Activated CD4-positive, alpha-beta T cell treated with anti-CD3 and anti-CD28 coated beads for 36 hours (primary cell): ENCODE measurements at regions of chr6 and their contacts with region 1.

Region 1: GRCh38 chr6:24991810-24992467 is 56.2 kb upstream of the RIPOR2 start:
- DNase-seq: peak; percentile 83
- ATAC-seq: peak; percentile 91
- H3K4me3 Mint-ChIP-seq: peak overlapping the region; percentile 49
- H3K27ac Mint-ChIP-seq: peak overlapping the region; percentile 82
- H3K4me1 Mint-ChIP-seq: peaks cover 63% of the 10 kb centered on the region
- H3K27me3 Mint-ChIP-seq: no peaks in the 10 kb centered on the region

Region 2: DNA sequence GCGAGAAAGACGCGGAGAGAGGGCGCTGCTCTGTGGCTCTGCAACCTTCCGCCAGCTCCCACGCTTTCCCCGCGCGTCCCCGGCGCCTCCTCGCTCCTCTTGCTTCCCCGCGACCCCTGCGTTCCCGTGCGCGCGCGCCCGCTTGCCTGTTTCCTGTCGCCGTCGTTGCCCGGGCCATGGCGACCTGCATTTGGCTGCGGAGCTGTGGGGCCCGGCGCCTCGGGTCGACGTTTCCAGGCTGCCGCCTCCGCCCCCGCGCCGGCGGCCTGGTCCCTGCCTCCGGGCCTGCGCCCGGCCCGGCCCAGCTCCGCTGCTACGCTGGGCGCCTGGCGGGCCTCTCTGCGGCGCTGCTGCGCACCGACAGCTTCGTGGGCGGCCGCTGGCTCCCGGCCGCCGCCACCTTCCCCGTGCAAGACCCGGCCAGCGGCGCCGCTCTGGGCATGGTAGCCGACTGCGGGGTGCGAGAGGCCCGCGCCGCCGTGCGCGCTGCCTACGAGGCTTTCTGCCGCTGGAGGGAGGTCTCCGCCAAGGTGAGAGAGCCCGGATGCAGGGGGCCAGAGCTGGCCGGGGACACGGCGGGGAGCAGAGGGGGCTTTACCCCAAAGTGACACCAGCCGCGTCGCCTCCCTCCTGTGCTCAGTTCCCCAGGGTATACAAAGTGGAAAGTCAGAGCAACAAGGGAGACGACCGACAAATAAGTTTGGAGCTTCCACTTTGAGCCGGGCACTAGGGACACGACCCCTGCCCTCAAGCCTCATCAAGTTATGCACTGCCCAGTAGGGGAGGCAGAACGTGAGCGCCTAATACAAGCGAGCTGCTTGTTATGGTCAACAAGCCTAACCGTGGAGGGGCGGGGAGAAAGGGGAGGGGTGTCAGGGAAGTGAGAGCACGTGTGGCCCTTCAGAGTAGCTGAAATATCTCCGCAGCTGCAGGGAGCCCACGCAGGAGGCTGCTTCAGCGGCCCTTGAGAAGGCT is 496.8 kb before region 1 on chr6 and contains the start of gene ALDH5A1:
- CTCF ChIA-PET with region 1: no interaction called
- POLR2A ChIA-PET with region 1: no interaction called
- intact Hi-C with region 1: no loop called
- DNase-seq: peak; percentile 92
- ATAC-seq: peak; percentile 84
- H3K4me3 Mint-ChIP-seq: peak within 1 kb of the TSS; percentile 77
- H3K27ac Mint-ChIP-seq: peak within 1 kb of the TSS; percentile 76
- H3K4me1 Mint-ChIP-seq: peaks cover 14% of the 10 kb centered on the region
- H3K27me3 Mint-ChIP-seq: no peaks in the 10 kb centered on the region
- total RNA-seq, gene ALDH5A1: 16.5 to 18.8 TPM

Region 3: DNA sequence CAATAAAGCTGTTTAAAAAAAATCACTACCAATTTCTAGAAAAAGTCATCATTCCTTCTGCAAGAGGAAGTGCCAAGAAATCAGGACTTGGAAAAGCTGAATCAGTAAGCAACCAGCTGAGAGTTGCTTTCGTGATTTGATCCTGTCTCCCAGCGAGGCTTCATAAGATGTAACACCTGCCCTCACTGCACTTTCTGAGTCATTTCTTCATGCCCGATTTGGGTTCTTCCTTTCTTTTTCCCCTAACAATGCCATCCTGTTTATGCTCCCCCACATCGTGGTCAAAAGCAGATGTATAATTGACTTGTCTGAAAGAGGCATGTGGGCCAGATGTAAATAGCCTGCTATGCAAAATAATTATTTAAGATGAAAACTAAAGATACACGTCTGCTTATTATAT is 108.3 kb before region 1 on chr6:
- CTCF ChIA-PET with region 1: interaction called, 30 read pairs
- POLR2A ChIA-PET with region 1: no interaction called
- intact Hi-C with region 1: no loop called
- DNase-seq: peak; percentile 69
- ATAC-seq: peak; percentile 85
- H3K4me3 Mint-ChIP-seq: peak overlapping the region; percentile 72
- H3K27ac Mint-ChIP-seq: peak overlapping the region; percentile 100
- H3K4me1 Mint-ChIP-seq: peaks cover 88% of the 10 kb centered on the region
- H3K27me3 Mint-ChIP-seq: no peaks in the 10 kb centered on the region

Region 4: DNA sequence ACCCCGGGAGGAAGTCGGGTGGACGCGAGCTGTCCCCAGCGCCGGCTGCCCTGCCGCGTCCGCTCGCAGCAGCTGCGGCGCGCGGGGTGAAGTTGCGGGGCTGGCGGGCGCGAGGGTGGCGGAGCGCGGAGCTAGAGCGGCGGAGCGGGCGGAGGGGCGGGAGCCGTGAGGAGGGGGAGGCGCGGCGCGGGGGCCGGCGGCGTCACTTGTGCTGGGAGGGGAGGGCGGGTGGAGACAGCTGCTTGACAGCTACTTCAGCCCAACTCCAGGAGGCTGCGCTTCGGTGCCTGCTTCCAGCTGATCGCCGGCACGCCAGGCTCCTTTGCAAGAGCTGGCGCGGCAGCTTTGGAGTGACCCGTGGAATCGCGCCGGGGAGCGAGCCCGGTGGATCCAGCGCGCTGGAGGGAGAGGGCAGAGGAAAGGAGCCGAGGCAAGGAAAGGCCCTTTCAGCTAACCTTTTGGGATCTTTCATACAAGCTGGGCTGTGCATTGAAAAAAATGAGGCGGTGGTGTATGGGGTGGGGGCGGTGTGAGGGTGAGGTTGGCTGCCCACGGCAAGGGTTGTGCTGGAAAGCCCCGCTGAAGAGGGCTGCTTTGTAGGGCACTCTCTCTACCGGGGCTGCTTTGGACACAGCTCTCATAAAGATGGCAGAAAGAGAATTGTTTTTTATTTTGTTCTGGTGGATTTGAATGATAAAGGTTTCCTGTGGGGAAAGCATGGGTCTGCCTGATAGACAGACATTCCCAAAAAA is 80.8 kb before region 1 on chr6:
- CTCF ChIA-PET with region 1: interaction called, 27 read pairs
- POLR2A ChIA-PET with region 1: interaction called, 3 read pairs
- intact Hi-C with region 1: loop called in 1 of 2 experiments (anchors 2 kb)
- DNase-seq: peak; percentile 80
- ATAC-seq: peak; percentile 8
- H3K4me3 Mint-ChIP-seq: peak overlapping the region; percentile 85
- H3K27ac Mint-ChIP-seq: peak overlapping the region; percentile 90
- H3K4me1 Mint-ChIP-seq: peaks cover 83% of the 10 kb centered on the region
- H3K27me3 Mint-ChIP-seq: no peaks in the 10 kb centered on the region

Region 5: DNA sequence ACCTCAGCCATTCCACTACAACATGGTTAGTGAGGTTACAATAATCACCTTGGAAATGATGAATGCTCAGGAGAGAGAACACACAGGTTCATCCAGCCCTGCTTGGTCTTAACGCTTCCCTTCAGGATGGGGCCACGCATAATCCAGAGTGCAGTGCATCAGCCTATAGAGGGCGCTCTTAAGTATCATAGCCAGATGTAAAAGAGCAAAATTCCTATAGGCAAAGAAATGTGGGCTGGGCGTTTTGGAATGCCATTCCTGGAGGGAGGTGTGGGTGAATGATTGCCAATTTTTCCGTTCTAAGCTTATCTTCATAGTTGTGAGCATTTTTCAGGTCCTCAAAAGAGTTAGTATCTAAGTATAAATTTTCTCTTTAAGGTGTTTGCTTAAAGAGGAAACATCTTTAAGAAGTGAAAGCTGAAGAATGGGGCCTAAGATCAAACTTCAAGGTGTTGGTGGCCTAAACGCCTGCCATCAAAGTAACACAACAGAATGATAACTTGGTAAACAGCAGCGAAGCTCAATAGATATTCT is 58.0 kb before region 1 on chr6:
- CTCF ChIA-PET with region 1: interaction called, 152 read pairs
- POLR2A ChIA-PET with region 1: interaction called, 13 read pairs
- intact Hi-C with region 1: loop called (anchors 1 to 2 kb)
- DNase-seq: peak; percentile 59
- ATAC-seq: no peak
- H3K4me3 Mint-ChIP-seq: peak overlapping the region; percentile 93
- H3K27ac Mint-ChIP-seq: peak overlapping the region; percentile 95
- H3K4me1 Mint-ChIP-seq: peaks cover 88% of the 10 kb centered on the region
- H3K27me3 Mint-ChIP-seq: no peaks in the 10 kb centered on the region

Region 6: DNA sequence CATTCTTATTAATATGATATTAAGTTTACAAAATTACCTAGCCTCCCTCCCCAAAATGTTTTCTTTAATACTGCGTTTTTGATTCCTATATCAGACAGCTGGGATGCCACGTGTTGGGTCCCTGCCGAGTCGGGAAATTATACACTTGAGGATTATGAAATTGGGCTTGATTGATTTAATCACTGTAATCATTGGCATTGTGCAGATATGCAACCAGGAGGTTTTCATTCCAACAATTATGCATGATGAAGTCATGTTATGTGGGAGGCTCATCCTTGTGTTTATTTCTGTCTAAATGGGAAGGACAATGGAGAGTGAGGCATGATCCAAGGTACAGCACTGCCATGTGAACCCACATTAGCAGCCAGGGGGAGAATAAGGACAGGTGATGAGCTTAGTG is 25.6 kb before region 1 on chr6:
- CTCF ChIA-PET with region 1: interaction called, 45 read pairs
- POLR2A ChIA-PET with region 1: no interaction called
- intact Hi-C with region 1: no loop called
- DNase-seq: no peak
- ATAC-seq: no peak
- H3K4me3 Mint-ChIP-seq: no peak overlapping the region
- H3K27ac Mint-ChIP-seq: no peak overlapping the region
- H3K4me1 Mint-ChIP-seq: peaks cover 71% of the 10 kb centered on the region
- H3K27me3 Mint-ChIP-seq: no peaks in the 10 kb centered on the region

Region 7: DNA sequence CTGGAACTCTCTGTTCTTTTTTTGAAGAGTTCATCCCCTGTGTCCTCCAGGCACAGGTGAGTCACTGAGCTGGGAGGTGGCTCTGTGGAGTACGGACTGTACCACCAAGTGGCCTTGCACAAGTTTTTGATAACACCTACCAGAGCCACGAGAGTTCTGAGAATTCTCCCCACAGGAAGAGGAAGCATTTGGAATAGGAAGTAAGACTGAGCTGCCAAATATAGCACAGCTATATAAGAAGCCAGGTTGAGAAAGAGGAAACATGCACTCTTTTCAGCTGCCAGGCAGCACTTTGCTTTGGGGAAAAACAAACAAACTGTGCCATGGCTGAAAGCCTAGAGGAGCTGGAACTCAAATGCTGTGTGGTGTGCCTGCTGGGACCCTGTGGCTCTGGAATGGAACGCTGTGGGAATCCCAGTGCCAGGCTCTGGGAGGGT is 14.6 kb after region 1 on chr6:
- CTCF ChIA-PET with region 1: interaction called, 71 read pairs
- POLR2A ChIA-PET with region 1: no interaction called
- intact Hi-C with region 1: no loop called
- DNase-seq: peak; percentile 62
- ATAC-seq: peak; percentile 58
- H3K4me3 Mint-ChIP-seq: peak overlapping the region; percentile 32
- H3K27ac Mint-ChIP-seq: peak overlapping the region; percentile 79
- H3K4me1 Mint-ChIP-seq: peaks cover 83% of the 10 kb centered on the region
- H3K27me3 Mint-ChIP-seq: no peaks in the 10 kb centered on the region

Region 8: DNA sequence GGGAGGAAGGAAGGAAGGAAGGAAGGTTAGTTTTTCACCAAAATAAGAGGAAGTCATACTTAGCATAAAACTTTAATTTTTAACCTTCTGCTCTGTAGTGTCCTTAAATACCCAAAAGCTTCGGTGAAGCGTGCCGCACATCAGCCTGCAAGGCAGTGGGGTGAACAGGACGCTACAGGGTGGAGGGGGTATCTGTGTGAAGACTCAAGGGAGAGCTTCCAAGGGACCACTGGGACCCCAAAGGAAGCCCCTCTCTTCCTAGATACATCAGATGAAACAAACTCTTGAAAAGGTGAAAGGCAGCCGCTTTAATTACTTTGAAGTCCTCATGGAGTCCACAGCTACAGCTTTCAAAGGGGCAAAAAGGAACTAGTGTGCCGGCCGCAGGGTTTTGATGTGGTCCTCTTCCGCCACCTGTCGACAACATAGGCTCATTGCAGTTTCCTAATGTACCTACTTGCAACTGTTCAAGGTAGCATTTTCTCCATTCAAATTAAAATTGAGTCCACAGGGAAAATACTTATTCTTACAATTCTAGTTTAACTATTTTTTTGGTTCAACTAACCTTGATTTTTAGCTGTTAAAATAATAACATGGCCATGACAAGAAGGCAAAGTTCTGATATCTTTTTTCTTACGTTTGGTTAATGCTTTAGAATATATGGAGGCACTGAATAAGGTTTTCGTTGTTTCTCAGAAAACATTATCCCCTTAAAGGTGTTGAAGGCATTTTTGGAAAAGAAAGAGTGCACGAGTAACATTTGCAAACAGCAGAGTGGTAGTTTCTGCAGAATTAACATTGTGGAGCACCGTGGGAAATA is 78.8 kb after region 1 on chr6:
- CTCF ChIA-PET with region 1: interaction called, 24 read pairs
- POLR2A ChIA-PET with region 1: no interaction called
- intact Hi-C with region 1: no loop called
- DNase-seq: peak; percentile 88
- ATAC-seq: peak; percentile 94
- H3K4me3 Mint-ChIP-seq: no peak overlapping the region
- H3K27ac Mint-ChIP-seq: peak overlapping the region; percentile 47
- H3K4me1 Mint-ChIP-seq: peaks cover 4% of the 10 kb centered on the region
- H3K27me3 Mint-ChIP-seq: no peaks in the 10 kb centered on the region

Region 9: DNA sequence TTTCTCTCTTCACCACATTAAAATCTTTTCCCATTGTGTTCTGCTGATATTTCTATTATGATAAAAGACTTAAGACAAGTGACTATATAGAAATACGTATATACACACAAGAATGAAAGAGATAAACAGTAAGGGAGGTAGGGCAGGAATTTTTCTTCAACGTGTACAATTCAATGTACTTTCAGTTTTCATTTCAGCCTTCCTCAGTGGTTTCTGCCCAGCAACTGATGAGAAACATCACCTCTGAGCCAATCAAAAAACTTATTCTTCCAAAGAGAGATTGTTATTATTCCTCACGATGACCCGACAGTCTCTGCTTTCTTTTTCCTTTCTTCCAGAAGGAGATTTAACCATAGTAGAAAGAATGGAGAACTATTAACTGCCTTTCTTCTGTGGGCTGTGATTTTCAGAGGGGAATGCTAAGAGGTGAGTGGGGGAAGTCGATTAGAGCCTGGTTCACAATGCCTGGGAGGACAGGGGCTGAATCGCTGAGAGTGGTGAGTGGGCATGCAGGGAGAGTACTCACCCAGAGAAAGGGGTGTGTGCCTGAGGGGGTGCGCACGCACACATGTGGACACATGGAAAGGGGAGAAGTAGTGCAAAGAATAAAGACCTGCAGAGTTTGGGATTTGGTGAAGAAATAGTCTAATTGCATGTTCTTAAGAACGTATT is 1410.2 kb after region 1 on chr6 and contains the start of gene BTN3A1:
- CTCF ChIA-PET with region 1: no interaction called
- POLR2A ChIA-PET with region 1: no interaction called
- intact Hi-C with region 1: no loop called
- DNase-seq: peak; percentile 81
- ATAC-seq: peak; percentile 95
- H3K4me3 Mint-ChIP-seq: peak within 1 kb of the TSS; percentile 99
- H3K27ac Mint-ChIP-seq: peak within 1 kb of the TSS; percentile 97
- H3K4me1 Mint-ChIP-seq: peaks cover 48% of the 10 kb centered on the region
- H3K27me3 Mint-ChIP-seq: no peaks in the 10 kb centered on the region
- total RNA-seq, gene BTN3A1: 31.4 to 33.2 TPM